ENCODE measurements at regions of chr4 and their contacts with region 1.

Region 1: DNA sequence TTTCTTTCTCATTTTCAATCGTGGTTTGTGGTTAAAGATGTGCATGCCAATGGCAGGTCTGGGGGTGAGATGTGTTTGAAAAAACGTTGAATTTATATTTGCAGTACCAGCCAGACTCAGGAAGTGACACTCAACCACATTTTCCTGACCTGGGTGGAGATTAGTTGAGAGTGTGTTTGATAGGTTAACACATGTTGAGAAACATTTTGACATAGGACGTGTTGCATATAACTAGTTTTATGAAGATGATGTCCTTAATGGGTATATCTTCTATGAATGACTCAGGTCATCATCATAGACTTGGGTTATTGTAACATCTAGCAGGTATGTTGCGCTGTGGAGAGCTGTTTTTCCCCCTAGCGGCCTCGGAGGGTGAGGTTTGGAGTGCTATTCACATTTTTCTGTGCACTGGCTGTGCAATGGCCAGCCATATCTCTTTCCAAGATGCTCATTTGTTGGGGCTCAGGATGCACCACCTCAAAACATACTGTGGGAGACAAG is 21.7 kb upstream of the CD38 start:
- DNase-seq: peak; percentile 89
- H3K4me3 Mint-ChIP-seq: peak overlapping the region; percentile 54
- H3K27ac Mint-ChIP-seq: peak overlapping the region; percentile 83
- H3K4me1 Mint-ChIP-seq: peaks cover 44% of the 10 kb centered on the region
- H3K27me3 Mint-ChIP-seq: no peaks in the 10 kb centered on the region

Region 2: DNA sequence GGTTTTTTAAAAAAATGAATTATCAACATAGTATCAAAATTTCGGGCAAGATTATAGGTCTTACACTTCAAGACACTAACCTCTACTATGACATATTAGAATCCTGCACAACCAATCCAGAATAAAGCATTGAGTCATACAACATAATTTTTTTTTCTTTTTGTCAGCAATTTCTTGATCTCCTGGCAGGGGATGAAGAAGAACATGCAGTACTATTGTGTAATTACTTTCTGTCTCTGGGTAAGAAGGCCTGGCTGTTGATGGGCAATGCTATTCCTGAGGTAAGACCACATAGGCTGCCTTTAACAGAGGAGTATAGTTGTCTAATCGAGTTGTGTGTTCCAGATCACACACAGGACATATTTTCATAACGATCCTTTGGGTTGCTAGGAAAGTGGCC is 168.8 kb before region 1 on chr4:
- CTCF ChIA-PET with region 1: no interaction called
- intact Hi-C with region 1: no loop called
- DNase-seq: no peak
- H3K4me3 Mint-ChIP-seq: no peak overlapping the region
- H3K27ac Mint-ChIP-seq: no peak overlapping the region
- H3K4me1 Mint-ChIP-seq: no peaks in the 10 kb centered on the region
- H3K27me3 Mint-ChIP-seq: no peaks in the 10 kb centered on the region

Region 3: DNA sequence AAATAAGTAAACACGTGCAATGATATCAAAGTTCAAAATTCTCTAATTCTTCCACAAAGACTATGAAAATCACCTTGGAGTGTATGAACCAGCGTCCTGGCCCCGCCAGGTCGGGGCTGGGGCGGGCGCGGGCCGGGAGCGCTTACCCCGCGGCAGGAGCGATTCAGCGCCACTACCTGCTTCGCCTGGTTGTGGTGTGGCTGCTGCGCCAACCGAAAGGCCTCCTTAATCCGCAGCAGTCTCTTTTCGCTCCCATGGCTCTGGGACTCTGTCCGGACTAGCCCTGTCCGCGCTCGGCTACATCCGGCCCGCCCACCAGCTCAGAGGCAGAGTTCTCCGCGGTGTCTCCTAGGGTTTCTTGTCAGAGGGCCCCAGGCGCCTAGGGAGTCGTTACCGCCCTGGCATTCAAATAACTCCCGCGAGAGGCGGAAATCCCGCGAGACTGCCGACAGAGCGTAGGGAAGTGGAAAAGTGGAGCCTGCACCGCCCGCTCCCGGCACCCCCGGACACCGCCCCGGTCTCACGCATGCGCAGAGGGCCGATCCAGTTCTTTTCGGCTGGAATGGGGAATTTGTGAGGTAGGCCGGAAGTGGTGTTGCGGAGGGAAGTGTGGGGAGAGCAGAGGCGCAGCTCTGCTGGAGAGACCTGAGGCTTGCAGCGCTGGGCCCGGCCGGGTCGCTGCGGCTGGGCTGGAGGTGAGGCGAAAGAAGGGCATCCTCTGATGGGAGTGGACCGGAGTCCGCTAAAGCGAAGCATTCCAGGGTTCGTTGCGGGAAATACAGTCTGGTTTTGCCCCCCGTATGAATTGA is 75.0 kb before region 1 on chr4 and contains the start of gene FAM200B:
- CTCF ChIA-PET with region 1: no interaction called
- intact Hi-C with region 1: loop called (anchors 1 kb)
- DNase-seq: peak; percentile 99
- H3K4me3 Mint-ChIP-seq: peak within 1 kb of the TSS; percentile 90
- H3K27ac Mint-ChIP-seq: peak within 1 kb of the TSS; percentile 89
- H3K4me1 Mint-ChIP-seq: peaks cover 39% of the 10 kb centered on the region
- H3K27me3 Mint-ChIP-seq: peaks cover 3% of the 10 kb centered on the region
- total RNA-seq, gene FAM200B: 8.0 to 9.1 TPM

Region 4: DNA sequence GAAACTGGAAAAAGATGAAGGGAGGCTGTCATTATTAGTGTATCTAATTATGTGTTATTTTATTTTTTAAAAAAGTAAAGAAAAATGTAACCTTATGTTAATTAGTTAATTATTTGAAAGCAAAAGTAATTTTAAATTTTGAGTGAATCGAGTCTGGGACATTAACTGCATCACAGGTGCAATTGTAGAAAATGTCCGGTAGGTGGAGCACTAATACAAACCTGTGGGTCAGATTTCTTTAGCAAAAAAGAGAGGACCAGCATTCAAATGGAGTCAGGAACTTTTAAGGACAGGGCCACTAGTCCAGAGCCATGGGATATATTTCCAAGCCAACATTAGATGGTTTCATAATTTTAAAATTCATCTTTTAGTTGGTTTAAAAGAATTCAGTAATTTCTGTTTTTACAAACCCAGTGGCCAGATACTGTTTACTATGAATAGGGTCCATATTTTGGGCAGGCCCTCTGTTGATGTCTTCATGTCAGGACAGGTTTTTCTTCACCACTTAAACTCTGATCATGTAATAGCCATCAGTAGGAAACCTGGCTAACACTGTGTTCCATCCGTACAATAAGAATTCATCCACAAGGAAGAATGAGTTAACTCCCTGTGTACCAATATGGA is 26.4 kb before region 1 on chr4:
- CTCF ChIA-PET with region 1: interaction called, 5 read pairs
- intact Hi-C with region 1: loop called (anchors 1 kb)
- DNase-seq: peak; percentile 54
- H3K4me3 Mint-ChIP-seq: no peak overlapping the region
- H3K27ac Mint-ChIP-seq: no peak overlapping the region
- H3K4me1 Mint-ChIP-seq: peaks cover 13% of the 10 kb centered on the region
- H3K27me3 Mint-ChIP-seq: no peaks in the 10 kb centered on the region

Region 5: DNA sequence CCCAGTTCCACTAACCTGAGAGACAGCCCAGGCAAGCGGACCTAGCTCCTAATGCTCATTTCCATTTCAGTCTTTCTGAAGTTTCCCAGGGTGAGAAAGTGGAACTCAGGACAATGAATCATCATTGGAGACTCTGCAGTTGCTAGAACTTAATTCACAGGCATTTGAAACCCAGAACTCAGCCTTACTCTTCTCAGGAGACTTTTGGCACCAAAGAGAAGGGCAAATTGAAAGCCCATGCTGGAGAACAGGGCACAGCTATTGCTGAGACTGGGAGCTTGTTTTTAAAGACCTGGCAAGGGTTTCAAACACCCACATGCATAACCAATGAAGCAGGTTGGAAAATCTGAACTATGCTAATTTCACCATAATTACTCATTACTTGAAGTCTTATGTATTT is 17.5 kb before region 1 on chr4:
- CTCF ChIA-PET with region 1: interaction called, 35 read pairs
- intact Hi-C with region 1: loop called (anchors 1 kb)
- DNase-seq: peak; percentile 25
- H3K4me3 Mint-ChIP-seq: no peak overlapping the region
- H3K27ac Mint-ChIP-seq: no peak overlapping the region
- H3K4me1 Mint-ChIP-seq: peaks cover 44% of the 10 kb centered on the region
- H3K27me3 Mint-ChIP-seq: no peaks in the 10 kb centered on the region

Region 6: DNA sequence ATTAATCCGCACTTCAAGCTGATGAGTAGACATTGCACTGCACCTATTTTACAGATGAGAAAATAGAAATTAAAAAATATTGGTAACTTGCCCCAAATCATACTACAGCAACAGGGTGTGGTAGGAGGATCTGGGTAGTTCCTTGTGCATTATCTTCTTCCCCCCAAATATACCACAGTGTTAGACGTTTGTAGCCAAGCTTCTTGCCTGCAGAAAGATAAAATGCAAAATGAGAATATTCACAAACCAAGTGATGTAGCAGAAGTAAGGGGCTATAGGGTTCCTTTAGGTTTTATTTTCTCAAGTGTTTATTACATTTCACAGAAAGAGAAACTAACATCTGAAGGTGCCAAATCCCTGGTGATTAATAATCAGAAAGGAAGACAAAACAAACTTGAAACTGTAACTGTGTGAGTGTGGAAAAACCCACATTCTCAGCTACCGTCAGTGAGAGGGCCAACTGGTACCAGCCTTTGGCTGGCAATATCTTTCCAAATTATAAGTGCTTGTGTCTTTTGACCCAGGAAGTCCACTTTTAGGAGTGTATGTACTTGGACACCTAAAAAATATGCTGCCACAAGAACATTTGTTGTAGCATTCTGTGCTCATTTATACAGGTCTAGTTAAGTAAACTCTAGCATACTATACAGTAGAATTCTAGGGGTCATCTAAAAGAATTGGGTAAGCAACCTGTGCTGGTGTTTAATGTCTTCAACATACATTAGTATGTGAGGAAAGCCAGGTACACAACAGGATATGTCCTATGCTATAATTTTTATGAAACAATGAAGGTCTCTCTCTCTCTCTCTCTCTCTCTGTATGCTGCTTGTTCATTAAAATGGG is 15.0 kb after region 1 on chr4:
- CTCF ChIA-PET with region 1: interaction called, 52 read pairs
- intact Hi-C with region 1: loop called (anchors 1 kb)
- DNase-seq: peak; percentile 57
- H3K4me3 Mint-ChIP-seq: peak overlapping the region; percentile 41
- H3K27ac Mint-ChIP-seq: no peak overlapping the region
- H3K4me1 Mint-ChIP-seq: peaks cover 69% of the 10 kb centered on the region
- H3K27me3 Mint-ChIP-seq: peaks cover 8% of the 10 kb centered on the region

Region 7: DNA sequence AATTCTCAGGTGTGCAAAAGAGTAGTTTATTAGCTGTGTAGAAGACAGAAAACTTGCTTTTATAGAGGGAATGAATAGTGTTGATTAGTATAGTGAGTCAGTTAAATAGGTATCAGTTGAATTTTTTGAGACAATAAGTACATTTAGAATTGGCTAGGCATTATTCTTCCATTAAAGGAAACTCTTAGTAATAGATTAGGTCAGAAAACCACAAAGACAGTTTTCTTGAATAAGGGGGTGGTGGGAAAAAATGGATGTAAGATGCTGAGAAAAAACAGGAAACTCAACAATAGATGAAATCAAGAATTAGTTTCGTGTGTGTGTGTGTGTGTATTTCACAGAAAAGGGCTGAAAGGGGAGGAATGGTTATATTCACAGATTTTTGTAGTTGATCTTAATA is 38.5 kb after region 1 on chr4:
- CTCF ChIA-PET with region 1: no interaction called
- intact Hi-C with region 1: loop called (anchors 1 kb)
- DNase-seq: no peak
- H3K4me3 Mint-ChIP-seq: peak overlapping the region; percentile 39
- H3K27ac Mint-ChIP-seq: peak overlapping the region; percentile 47
- H3K4me1 Mint-ChIP-seq: peaks cover 53% of the 10 kb centered on the region
- H3K27me3 Mint-ChIP-seq: no peaks in the 10 kb centered on the region

Region 8: DNA sequence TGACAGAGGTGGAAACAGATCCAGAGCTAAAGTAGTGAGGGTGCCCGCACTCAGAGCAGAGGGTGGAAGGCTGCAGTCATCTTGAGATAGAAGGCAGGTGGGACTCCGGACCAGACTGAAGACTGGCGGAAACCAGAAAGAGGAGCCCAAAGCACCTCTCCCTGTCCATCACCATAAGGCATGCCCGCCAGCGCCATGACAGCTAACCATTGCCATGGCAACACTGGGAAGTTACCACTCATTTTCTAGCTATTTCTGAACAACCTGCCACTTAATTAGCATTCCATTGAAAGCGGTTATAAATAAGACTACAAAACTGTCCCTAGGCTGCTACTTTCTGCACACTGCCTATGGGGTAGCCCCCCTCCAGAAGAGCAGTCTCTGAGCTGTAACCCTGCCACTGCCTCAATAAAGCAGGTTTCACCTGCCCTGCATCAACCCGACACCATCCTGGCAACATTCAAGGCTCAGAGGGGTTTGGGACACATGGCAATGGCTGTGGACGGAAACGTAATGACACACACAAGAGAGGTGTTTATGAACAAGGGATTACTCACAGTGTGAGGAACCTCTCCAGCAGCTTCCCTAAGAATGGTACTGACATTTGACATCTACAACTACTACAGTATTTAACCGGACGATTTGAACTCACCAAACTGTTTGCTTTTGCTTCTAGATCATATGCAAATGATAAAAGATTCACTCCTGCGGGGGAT is 234.3 kb after region 1 on chr4:
- CTCF ChIA-PET with region 1: no interaction called
- intact Hi-C with region 1: no loop called
- DNase-seq: no peak
- H3K4me3 Mint-ChIP-seq: no peak overlapping the region
- H3K27ac Mint-ChIP-seq: no peak overlapping the region
- H3K4me1 Mint-ChIP-seq: peaks cover 2% of the 10 kb centered on the region
- H3K27me3 Mint-ChIP-seq: peaks cover 5% of the 10 kb centered on the region

Region 9: DNA sequence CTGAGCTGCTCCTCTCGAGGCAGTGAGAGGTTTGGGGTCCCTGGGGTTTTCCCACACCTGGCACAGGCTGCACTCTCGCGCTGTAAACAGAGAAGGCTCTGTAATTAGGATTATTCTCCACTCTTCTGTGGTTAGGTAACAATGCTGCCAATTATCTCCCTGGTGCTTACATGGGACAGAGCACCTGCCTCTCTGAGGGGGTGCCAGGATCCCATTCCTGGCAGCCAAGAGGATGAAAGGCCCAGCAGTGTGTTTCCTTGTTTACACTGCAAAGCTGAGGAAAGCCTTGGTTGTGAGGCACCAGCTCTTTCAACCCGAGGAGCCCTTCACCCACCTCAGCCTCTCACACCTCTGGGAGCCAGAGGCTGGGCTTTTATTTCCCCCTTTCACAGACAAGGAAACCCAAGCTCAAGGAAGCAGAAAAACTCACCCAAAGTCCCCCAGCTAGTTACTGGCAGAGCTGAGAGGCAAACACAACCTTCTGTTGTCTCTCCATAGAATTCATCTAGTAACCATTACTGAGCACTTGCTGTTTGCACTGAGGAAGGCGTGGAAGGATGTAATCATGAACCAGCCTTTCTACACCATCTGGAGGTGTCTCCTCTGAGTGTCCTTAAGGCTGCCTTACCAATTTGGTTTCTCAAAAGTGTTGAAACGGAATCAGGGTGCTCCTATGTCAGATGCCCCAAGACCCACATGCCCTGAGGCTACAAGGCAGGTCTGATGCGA is 367.1 kb after region 1 on chr4:
- CTCF ChIA-PET with region 1: no interaction called
- intact Hi-C with region 1: no loop called
- DNase-seq: no peak
- H3K4me3 Mint-ChIP-seq: no peak overlapping the region
- H3K27ac Mint-ChIP-seq: peak overlapping the region; percentile 85
- H3K4me1 Mint-ChIP-seq: peaks cover 25% of the 10 kb centered on the region
- H3K27me3 Mint-ChIP-seq: no peaks in the 10 kb centered on the region